ENCODE measurements at regions of chr15 and their contacts with region 1.

Region 1: DNA sequence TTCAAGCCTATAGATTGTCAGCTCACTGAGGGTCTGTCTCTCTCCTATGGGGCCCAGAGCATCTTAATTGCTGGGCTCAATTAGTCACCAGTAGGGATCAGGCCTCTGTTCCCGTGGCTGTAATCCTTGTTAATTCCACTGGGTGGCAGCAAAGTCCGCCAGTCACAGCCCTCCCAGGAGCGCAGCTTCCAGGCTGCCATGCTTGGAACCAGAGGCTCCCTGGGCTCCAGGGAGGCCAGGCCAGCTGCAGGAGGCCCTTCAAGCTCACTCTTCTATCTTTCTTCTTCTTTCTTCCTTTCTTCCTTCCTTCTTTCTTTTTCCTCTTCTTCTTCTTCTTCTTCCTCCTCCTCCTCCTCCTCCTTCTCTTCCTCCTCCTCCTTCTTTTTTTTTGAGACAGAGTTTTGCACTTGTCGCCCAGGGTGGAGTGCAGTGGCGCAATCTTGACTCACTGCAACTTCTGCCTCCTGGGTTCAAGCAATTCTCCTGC is 14.4 kb downstream of the RNU5B-1 start:
- DNase-seq: peak; percentile 86
- ATAC-seq: peak; percentile 100
- H3K4me3 Mint-ChIP-seq: no peak overlapping the region
- H3K27ac Mint-ChIP-seq: no peak overlapping the region
- H3K4me1 Mint-ChIP-seq: no peaks in the 10 kb centered on the region
- H3K27me3 Mint-ChIP-seq: peaks cover 4% of the 10 kb centered on the region

Region 2: GRCh38 chr15:65156692-65157091 is 162.2 kb before region 1 on chr15:
- CTCF ChIA-PET with region 1: no interaction called
- POLR2A ChIA-PET with region 1: no interaction called
- intact Hi-C with region 1: no loop called
- DNase-seq: no peak
- ATAC-seq: no peak
- H3K4me3 Mint-ChIP-seq: no peak overlapping the region
- H3K27ac Mint-ChIP-seq: no peak overlapping the region
- H3K4me1 Mint-ChIP-seq: no peaks in the 10 kb centered on the region
- H3K27me3 Mint-ChIP-seq: no peaks in the 10 kb centered on the region

Region 3: DNA sequence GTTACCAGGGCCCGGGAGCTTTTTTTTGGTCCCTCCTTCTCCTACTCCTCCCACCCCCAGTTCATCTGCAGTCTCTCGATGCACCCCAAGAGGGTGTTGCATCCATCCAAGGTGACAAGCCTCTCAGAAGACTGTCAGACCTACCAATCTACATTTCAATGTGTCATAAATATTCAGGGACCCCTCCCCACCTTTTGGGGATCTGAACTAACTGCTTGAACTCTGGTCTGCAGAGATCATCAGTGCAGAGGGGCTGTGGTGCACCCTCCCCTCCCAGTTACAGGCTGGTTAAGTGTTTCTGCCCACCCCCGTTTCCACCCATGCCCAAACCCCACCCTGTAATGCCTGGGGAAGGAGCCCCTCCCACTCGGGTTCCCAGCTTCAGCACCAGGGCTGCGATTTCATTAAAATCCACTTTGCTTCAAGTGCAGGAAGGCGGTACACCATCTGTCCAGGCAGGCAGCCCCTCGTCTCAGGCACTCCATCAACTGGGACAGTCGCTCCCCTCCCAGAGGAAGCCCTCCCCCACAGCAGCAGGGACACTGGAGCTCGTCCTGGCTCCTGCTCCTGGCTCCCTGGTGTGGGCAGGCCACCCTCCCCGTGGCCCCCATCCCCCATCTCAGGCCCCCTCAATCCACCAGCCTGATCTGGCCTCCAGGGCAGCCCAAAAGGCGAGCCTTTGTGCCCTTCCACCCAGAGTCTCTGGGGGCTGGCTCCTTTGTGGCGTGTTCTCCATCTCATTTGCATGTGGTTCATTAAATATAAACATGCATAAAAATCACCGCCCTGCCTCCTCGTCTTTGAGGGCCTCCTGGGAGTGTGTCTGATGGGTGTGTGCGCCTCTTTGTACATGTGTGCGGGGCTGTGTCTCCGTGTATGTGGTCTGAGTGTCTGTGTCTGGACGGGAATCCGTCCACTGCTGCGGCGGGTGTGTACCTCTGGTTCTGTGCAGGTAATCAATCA is 17.9 kb after region 1 on chr15:
- CTCF ChIA-PET with region 1: interaction called, 11 read pairs
- POLR2A ChIA-PET with region 1: no interaction called
- intact Hi-C with region 1: no loop called
- DNase-seq: no peak
- ATAC-seq: no peak
- H3K4me3 Mint-ChIP-seq: no peak overlapping the region
- H3K27ac Mint-ChIP-seq: no peak overlapping the region
- H3K4me1 Mint-ChIP-seq: no peaks in the 10 kb centered on the region
- H3K27me3 Mint-ChIP-seq: peaks cover 4% of the 10 kb centered on the region

Region 4: DNA sequence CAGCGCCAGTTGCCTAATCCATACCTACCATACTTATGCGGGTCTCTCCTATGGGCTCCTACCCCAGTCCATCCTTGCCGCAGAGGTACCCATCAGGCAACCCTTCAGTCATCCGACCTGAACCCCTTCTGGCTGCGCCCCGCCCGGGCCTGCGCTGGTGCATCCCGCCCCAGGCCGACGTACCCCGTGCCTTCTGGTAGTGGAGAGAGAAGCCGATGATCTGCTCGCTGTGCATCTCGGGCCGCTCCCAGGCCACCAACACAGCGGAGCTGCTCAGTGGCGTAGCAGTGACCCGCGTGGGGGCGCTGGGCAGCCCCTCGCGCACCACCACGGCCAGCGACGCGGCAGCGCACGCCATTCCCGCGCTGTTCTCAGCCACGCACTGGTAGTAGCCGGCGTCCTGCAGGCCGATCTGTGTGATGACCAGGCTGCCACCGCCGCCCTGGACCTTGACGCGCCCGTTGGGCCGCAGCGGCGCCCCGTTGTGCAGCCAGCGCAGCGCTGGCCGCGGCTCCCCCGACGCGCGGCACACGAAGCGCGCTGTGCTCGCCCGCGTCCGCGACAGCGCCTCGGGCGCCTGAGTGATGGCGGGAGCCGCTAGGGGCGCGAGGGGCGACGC is 76.8 kb after region 1 on chr15:
- CTCF ChIA-PET with region 1: interaction called, 11 read pairs
- POLR2A ChIA-PET with region 1: no interaction called
- intact Hi-C with region 1: loop called in 1 of 2 experiments (anchors 1 kb)
- DNase-seq: no peak
- ATAC-seq: peak; percentile 23
- H3K4me3 Mint-ChIP-seq: no peak overlapping the region
- H3K27ac Mint-ChIP-seq: no peak overlapping the region
- H3K4me1 Mint-ChIP-seq: peaks cover 5% of the 10 kb centered on the region
- H3K27me3 Mint-ChIP-seq: peaks cover 49% of the 10 kb centered on the region

Region 5: GRCh38 chr15:65400760-65401610 is 82.1 kb after region 1 on chr15:
- CTCF ChIA-PET with region 1: interaction called, 5 read pairs
- POLR2A ChIA-PET with region 1: no interaction called
- intact Hi-C with region 1: loop called (anchors 1 kb)
- DNase-seq: peak; percentile 74
- ATAC-seq: peak; percentile 87
- H3K4me3 Mint-ChIP-seq: no peak overlapping the region
- H3K27ac Mint-ChIP-seq: no peak overlapping the region
- H3K4me1 Mint-ChIP-seq: peaks cover 5% of the 10 kb centered on the region
- H3K27me3 Mint-ChIP-seq: peaks cover 41% of the 10 kb centered on the region

Region 6: GRCh38 chr15:65451989-65452388 is 133.1 kb after region 1 on chr15:
- CTCF ChIA-PET with region 1: no interaction called
- POLR2A ChIA-PET with region 1: no interaction called
- intact Hi-C with region 1: no loop called
- DNase-seq: no peak
- ATAC-seq: no peak
- H3K4me3 Mint-ChIP-seq: no peak overlapping the region
- H3K27ac Mint-ChIP-seq: no peak overlapping the region
- H3K4me1 Mint-ChIP-seq: no peaks in the 10 kb centered on the region
- H3K27me3 Mint-ChIP-seq: no peaks in the 10 kb centered on the region